ENCODE measurements at regions of chr13 and their contacts with region 1.

Region 1: GRCh38 chr13:37681300-37682032 is 82.9 kb upstream of the POSTN start:
- DNase-seq: peak; percentile 95
- H3K4me3 ChIP-seq: peak overlapping the region in 1 of 3 experiments; percentile 14
- H3K27ac ChIP-seq: peak overlapping the region; percentile 86
- H3K4me1 ChIP-seq: peaks cover 21% of the 10 kb centered on the region
- H3K27me3 ChIP-seq: no peaks in the 10 kb centered on the region
- CTCF ChIP-seq: no peak
- POLR2A ChIP-seq: no peak

Region 2: DNA sequence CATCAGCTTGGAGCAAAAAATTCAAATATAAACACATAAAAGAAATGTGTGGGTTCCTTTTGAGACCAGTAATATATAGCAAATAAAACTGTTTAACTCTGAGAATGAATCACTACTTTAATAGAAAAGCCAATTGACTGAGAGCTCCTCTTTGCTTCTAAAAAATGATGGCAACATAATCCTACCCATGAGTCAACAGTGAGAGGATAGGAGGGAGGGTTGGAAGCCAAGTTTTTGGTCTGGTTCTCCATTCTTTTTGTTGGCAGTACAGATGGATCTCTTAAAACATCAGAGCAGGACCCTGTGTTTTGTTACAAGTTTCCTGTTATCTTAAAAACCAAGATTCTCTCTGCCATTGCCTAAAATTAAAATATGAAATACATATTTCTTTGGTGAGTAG is 32.9 kb before region 1 on chr13:
- CTCF ChIA-PET with region 1: no interaction called
- POLR2A ChIA-PET with region 1: no interaction called
- dilution Hi-C with region 1: no loop called
- intact Hi-C with region 1: loop called (anchors 5 kb)
- DNase-seq: no peak
- H3K4me3 ChIP-seq: no peak overlapping the region
- H3K27ac ChIP-seq: no peak overlapping the region
- H3K4me1 ChIP-seq: peaks cover 13% of the 10 kb centered on the region
- H3K27me3 ChIP-seq: no peaks in the 10 kb centered on the region
- CTCF ChIP-seq: no peak
- POLR2A ChIP-seq: no peak

Region 3: DNA sequence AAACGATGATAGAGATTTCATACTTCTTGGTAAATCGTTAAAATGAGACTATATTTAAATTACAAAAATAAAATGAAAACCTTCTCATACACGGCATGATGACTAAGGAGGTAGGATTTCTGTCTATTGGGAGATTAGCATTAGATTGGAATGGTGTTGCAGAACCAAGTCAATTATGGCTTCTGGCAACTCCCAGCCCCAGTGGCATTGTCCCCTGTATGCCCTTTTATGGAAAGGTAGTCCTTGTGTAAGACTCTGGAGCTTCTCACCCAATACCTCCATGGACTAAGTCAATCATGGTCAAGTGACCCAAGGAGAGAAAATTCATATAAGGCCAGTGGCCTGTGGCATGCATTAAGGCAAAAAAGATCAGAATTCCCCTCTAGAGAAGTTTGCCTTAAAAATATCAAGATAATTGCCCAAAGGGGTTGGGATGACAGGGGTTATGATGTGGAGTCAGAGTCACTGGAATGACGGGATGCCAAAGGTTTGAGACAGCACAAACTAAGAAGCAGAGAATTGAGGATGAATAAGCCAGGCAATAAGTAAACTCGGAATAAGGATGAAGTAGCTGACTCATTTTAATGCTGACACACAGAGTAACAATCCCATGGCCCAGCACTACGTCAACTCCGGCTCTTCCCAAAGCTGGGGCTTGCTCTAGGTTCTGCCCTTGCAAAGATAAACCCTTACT is 25.1 kb before region 1 on chr13:
- CTCF ChIA-PET with region 1: interaction called, 4 read pairs
- POLR2A ChIA-PET with region 1: no interaction called
- dilution Hi-C with region 1: no loop called
- intact Hi-C with region 1: loop called (anchors 1 kb)
- DNase-seq: peak; percentile 86
- H3K4me3 ChIP-seq: no peak overlapping the region
- H3K27ac ChIP-seq: peak overlapping the region; percentile 99
- H3K4me1 ChIP-seq: peaks cover 23% of the 10 kb centered on the region
- H3K27me3 ChIP-seq: no peaks in the 10 kb centered on the region
- CTCF ChIP-seq: no peak
- POLR2A ChIP-seq: no peak

Region 4: GRCh38 chr13:37701972-37702371 is 20.5 kb after region 1 on chr13:
- CTCF ChIA-PET with region 1: interaction called, 10 read pairs
- POLR2A ChIA-PET with region 1: no interaction called
- dilution Hi-C with region 1: no loop called
- intact Hi-C with region 1: loop called (anchors 1 kb)
- DNase-seq: peak; percentile 51
- H3K4me3 ChIP-seq: no peak overlapping the region
- H3K27ac ChIP-seq: peak overlapping the region; percentile 95
- H3K4me1 ChIP-seq: peaks cover 24% of the 10 kb centered on the region
- H3K27me3 ChIP-seq: no peaks in the 10 kb centered on the region
- CTCF ChIP-seq: no peak
- POLR2A ChIP-seq: no peak

Region 5: DNA sequence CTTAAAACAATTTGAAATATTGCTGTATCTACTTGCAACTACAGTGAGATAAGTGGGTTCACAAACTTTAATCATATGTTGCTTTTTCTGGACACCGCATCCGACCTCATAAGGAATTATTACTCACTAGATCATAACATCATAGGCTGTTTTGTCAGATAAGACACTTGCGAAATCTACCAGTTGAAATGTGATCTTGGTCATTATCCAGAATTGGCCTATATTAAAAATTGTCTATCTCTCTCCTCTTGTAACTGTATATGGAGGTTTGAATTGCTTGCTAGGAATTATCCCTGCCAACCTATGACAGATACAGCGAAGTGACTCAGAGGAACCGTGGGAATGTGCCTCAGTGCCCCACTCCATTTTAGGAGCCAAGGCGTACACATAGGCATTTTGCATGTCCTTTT is 34.1 kb after region 1 on chr13:
- CTCF ChIA-PET with region 1: no interaction called
- POLR2A ChIA-PET with region 1: no interaction called
- dilution Hi-C with region 1: no loop called
- intact Hi-C with region 1: loop called (anchors 1 kb)
- DNase-seq: peak; percentile 93
- H3K4me3 ChIP-seq: no peak overlapping the region
- H3K27ac ChIP-seq: peak overlapping the region; percentile 90
- H3K4me1 ChIP-seq: peaks cover 28% of the 10 kb centered on the region
- H3K27me3 ChIP-seq: no peaks in the 10 kb centered on the region
- CTCF ChIP-seq: no peak
- POLR2A ChIP-seq: peak; percentile 32

Region 6: GRCh38 chr13:37747071-37747612 is 65.7 kb after region 1 on chr13:
- CTCF ChIA-PET with region 1: no interaction called
- POLR2A ChIA-PET with region 1: no interaction called
- dilution Hi-C with region 1: no loop called
- intact Hi-C with region 1: loop called (anchors 5 kb)
- DNase-seq: peak; percentile 84
- H3K4me3 ChIP-seq: no peak overlapping the region
- H3K27ac ChIP-seq: peak overlapping the region; percentile 61
- H3K4me1 ChIP-seq: peaks cover 16% of the 10 kb centered on the region
- H3K27me3 ChIP-seq: no peaks in the 10 kb centered on the region
- CTCF ChIP-seq: no peak
- POLR2A ChIP-seq: no peak